Activated CD8-positive, alpha-beta T cell treated with anti-CD3 and anti-CD28 coated beads, Interleukin-2, amount 10 ng/mL, durations not matched to agents 7 days and 5 days (primary cell): ENCODE measurements at regions of chr18 and their contacts with region 1.

Region 1: DNA sequence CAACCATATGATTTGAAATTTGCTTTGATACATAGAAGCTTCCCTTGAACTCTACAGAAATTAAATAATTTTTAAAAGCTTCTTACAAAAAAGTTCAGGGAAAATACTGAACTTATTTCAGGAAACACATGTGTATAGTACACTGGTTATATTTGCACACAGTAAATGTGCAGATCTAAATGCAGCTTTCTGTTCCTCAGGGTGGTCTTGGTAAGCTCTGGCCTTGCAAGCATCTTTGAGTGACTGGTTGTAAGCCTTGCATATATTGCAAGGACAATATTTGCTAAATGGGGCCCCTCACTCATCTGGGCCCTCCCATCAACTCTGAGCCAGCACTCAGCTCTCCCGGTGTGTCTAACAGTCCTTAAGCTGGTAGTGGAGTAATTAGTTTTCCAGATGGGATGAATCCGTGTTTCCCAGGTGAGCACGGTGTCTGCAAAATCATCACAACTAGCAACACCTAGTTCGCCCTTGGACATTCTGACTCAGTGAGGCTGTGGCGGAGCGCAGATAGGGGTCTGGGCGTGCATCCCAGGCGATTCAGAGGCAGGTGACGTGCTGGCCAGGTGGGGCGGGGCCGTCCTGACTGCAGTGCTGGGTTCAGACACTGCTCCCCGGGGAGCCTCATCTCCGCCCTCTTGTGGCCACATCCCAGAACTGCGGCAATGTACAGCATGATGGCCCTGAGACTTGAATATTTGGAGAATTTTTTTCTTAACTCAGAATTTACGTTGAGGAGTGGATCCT is 149.6 kb downstream of the MBP start:
- DNase-seq: peak; percentile 93
- ATAC-seq: peak; percentile 97
- H3K4me3 Mint-ChIP-seq: no peak overlapping the region
- H3K27ac Mint-ChIP-seq: no peak overlapping the region
- H3K4me1 Mint-ChIP-seq: peaks cover 4% of the 10 kb centered on the region
- H3K27me3 Mint-ChIP-seq: no peaks in the 10 kb centered on the region

Region 2: DNA sequence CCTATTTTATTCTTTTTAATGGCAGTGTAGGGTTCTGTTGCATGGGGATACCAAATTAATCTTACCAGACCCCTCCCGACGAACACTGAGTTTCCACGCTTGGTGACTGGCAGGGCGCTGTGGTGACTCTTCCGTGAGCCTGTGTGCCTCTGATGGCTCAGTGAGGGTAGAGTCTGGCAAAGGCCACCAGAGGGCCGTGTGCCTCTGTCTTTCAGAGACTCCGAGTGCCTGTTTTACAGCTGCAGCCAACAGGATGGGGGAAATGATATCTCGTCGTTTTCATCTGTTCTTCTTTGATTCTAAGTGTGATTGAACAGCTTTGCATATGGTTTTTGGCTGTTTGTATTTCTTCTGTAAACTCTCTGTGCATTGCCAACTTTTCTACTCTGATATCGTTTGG is 60.9 kb before region 1 on chr18:
- CTCF ChIA-PET with region 1: interaction called, 59 read pairs
- POLR2A ChIA-PET with region 1: interaction called, 5 read pairs
- DNase-seq: peak; percentile 67
- ATAC-seq: peak; percentile 98
- H3K4me3 Mint-ChIP-seq: no peak overlapping the region
- H3K27ac Mint-ChIP-seq: no peak overlapping the region
- H3K4me1 Mint-ChIP-seq: peaks cover 12% of the 10 kb centered on the region
- H3K27me3 Mint-ChIP-seq: no peaks in the 10 kb centered on the region

Region 3: GRCh38 chr18:76963936-76964335 is 19.1 kb before region 1 on chr18:
- CTCF ChIA-PET with region 1: interaction called, 20 read pairs
- POLR2A ChIA-PET with region 1: interaction called, 3 read pairs
- DNase-seq: no peak
- ATAC-seq: no peak
- H3K4me3 Mint-ChIP-seq: no peak overlapping the region
- H3K27ac Mint-ChIP-seq: peak overlapping the region; percentile 39
- H3K4me1 Mint-ChIP-seq: peaks cover 27% of the 10 kb centered on the region
- H3K27me3 Mint-ChIP-seq: no peaks in the 10 kb centered on the region

Region 4: DNA sequence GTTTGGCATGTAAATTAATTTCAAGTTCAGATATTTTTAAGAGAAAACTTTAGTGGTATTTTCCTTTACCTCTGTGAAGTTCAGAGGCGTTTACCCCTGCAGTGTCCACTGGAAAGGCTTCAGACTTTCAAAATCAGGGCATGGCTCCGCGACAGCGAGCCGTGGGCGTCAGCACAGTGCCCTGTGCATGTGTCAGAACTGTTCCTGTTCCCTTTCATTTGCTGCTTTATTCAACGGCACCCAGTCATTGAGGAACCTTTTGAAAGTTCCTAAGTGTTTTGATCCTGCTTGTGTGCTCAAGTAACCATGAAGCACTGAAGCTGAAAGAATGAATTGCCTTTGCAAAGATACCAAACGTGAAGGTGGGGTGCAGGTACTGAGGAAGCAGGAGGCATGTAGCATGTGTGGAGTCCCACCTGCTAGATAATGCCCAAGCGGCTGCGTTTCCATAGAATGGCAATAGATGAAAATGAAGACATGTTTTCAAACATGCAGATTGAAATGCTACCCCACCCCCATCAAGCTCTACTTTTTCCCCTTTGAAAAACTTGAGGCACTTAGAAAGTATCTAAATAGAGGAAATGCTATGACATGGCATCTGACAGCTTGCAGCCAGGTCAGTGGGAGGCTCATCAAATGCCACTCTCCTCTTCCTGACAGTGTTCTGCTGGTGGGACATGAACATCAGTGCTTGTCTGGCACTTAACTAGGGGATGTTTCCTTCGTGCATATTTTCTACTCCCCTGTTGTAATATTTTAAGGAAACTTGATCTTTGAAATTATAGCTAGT is 12.0 kb before region 1 on chr18:
- CTCF ChIA-PET with region 1: interaction called, 20 read pairs
- POLR2A ChIA-PET with region 1: no interaction called
- DNase-seq: no peak
- ATAC-seq: no peak
- H3K4me3 Mint-ChIP-seq: no peak overlapping the region
- H3K27ac Mint-ChIP-seq: no peak overlapping the region
- H3K4me1 Mint-ChIP-seq: no peaks in the 10 kb centered on the region
- H3K27me3 Mint-ChIP-seq: no peaks in the 10 kb centered on the region

Region 5: DNA sequence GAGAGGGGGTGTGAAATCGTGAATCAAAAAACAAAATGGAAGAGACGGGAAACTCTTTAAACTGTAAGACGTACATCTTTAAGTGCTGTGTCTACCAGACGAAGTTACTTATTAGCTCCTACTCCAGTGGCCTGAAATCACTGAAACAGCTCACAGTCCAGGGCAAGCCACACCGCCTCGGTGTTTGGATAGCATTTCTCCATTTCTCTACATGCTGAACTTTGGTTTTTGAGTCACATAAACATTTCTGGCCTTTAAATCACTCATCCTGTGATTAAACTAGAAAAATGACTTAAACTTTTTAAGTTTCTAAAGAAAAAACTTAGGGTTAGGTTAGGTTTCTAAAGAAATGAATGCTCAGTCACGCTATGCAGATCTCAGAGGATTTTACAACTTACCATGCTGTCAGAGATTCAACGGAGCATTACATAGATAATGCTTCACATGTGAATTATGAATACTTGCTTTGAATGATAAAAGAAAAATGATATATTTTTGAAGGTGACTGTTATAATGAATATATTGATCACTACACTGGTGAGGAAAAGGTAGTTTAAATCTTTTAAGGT is 11.2 kb after region 1 on chr18:
- CTCF ChIA-PET with region 1: interaction called, 27 read pairs
- POLR2A ChIA-PET with region 1: no interaction called
- DNase-seq: no peak
- ATAC-seq: no peak
- H3K4me3 Mint-ChIP-seq: no peak overlapping the region
- H3K27ac Mint-ChIP-seq: no peak overlapping the region
- H3K4me1 Mint-ChIP-seq: peaks cover 6% of the 10 kb centered on the region
- H3K27me3 Mint-ChIP-seq: peaks cover 18% of the 10 kb centered on the region